Endothelial cell of umbilical vein (primary cell): ENCODE measurements at regions of chr10 and their contacts with region 1.

Region 1: DNA sequence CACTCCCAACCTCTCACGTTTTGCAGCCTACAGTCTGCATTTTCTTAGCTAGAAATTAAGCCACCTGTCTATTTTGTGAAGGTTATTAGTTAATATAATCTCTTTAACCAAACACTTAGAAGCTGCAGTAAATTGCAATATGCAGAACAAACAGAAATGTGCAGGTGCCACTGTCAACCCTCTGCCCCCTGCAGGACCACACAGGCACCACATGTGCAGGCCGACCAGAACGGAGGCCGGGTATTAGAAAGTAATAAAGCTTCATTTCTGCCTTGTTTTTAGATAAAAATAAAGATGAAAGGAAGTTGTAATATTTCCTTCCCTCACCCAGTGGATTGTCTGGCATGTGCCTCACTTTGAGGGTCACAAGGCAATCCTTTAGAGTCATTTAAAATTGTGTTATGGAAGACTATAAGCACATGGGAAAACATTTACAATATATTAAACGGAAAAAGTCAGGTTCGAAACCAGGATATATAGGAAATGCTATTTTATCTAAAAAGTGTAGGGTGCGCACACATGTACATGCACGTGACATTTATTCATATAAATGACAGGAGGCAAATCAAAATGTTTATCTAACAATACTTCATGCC is 158.2 kb downstream of the ARHGAP12 start:
- DNase-seq: peak; percentile 71
- H3K4me3 ChIP-seq: no peak overlapping the region
- H3K27ac ChIP-seq: no peak overlapping the region
- H3K4me1 ChIP-seq: peaks cover 7% of the 10 kb centered on the region
- H3K27me3 ChIP-seq: no peaks in the 10 kb centered on the region
- CTCF ChIP-seq: peak; percentile 84 to 86
- POLR2A ChIP-seq: no peak

Region 2: GRCh38 chr10:30751678-30752331 is 1018.6 kb before region 1 on chr10:
- CTCF ChIA-PET with region 1: interaction called, 15 read pairs
- POLR2A ChIA-PET with region 1: no interaction called
- dilution Hi-C with region 1: no loop called
- intact Hi-C with region 1: no loop called
- DNase-seq: peak; percentile 76
- H3K4me3 ChIP-seq: no peak overlapping the region
- H3K27ac ChIP-seq: no peak overlapping the region
- H3K4me1 ChIP-seq: peaks cover 5% of the 10 kb centered on the region
- H3K27me3 ChIP-seq: no peaks in the 10 kb centered on the region
- CTCF ChIP-seq: peak; percentile 90 to 98
- POLR2A ChIP-seq: no peak

Region 3: DNA sequence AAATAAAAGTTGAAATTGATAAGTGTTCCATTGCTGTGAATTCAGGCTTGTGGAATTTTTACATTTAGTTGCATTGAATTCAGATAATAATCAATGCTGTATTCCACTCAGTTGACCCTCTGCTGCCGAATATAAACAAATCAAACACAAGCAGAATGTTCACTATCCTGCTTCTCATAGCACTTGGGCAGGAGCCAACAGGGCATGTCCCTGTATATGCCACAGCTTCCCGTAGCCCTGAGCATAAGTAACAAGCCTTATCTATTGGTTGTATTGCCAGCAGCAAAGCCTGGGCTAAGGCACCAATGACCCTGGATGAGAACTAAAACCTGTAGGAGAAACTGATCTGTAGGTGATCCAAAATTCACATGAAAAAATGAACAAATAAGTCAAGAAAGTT is 12.3 kb after region 1 on chr10:
- CTCF ChIA-PET with region 1: interaction called, 21 read pairs
- POLR2A ChIA-PET with region 1: no interaction called
- dilution Hi-C with region 1: no loop called
- intact Hi-C with region 1: no loop called
- DNase-seq: peak; percentile 26
- H3K4me3 ChIP-seq: no peak overlapping the region
- H3K27ac ChIP-seq: no peak overlapping the region
- H3K4me1 ChIP-seq: no peaks in the 10 kb centered on the region
- H3K27me3 ChIP-seq: no peaks in the 10 kb centered on the region
- CTCF ChIP-seq: no peak
- POLR2A ChIP-seq: no peak

Region 4: GRCh38 chr10:32005050-32005449 is 234.6 kb after region 1 on chr10:
- CTCF ChIA-PET with region 1: no interaction called
- POLR2A ChIA-PET with region 1: no interaction called
- dilution Hi-C with region 1: no loop called
- intact Hi-C with region 1: no loop called
- DNase-seq: peak; percentile 57
- H3K4me3 ChIP-seq: no peak overlapping the region
- H3K27ac ChIP-seq: no peak overlapping the region
- H3K4me1 ChIP-seq: no peaks in the 10 kb centered on the region
- H3K27me3 ChIP-seq: no peaks in the 10 kb centered on the region
- CTCF ChIP-seq: peak; percentile 41 to 55
- POLR2A ChIP-seq: no peak

Region 5: GRCh38 chr10:32038777-32039176 is 268.4 kb after region 1 on chr10:
- CTCF ChIA-PET with region 1: no interaction called
- POLR2A ChIA-PET with region 1: no interaction called
- dilution Hi-C with region 1: no loop called
- intact Hi-C with region 1: no loop called
- DNase-seq: no peak
- H3K4me3 ChIP-seq: no peak overlapping the region
- H3K27ac ChIP-seq: no peak overlapping the region
- H3K4me1 ChIP-seq: peaks cover 12% of the 10 kb centered on the region
- H3K27me3 ChIP-seq: no peaks in the 10 kb centered on the region
- CTCF ChIP-seq: no peak
- POLR2A ChIP-seq: no peak